ENCODE measurements at regions of chr3 and their contacts with region 1.

Region 1: DNA sequence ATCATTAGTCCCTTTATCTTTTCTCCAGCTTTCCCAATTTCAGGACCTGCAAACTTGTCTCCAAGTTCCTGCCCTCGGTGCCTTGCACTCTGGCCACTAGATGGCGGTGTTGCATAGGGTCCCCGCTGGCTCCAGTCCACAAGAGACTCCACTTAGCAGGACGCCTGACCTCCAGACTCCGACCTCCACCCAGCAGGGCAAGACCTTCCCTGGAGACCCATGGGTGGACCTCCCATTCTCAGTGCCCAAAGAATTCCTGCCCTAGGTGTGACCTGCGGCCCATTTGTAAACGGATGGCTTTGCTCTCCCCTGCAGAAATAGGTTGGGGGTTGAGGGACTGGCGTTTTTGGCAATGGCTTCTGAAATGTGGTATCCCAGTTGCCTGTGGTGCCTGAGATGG is 82.6 kb downstream of the LSM3 start:
- DNase-seq: peak; percentile 80
- ATAC-seq: peak; percentile 53
- H3K4me3 ChIP-seq: no peak overlapping the region
- H3K4me3 Mint-ChIP-seq: no peak overlapping the region
- H3K27ac ChIP-seq: no peak overlapping the region
- H3K27ac Mint-ChIP-seq: no peak overlapping the region
- H3K4me1 ChIP-seq: no peaks in the 10 kb centered on the region
- H3K4me1 Mint-ChIP-seq: no peaks in the 10 kb centered on the region
- H3K27me3 ChIP-seq: peaks cover 0 to 7% (median under 1%) of the 10 kb centered on the region in 4 experiments
- H3K27me3 Mint-ChIP-seq: peaks cover 32% of the 10 kb centered on the region
- CTCF ChIP-seq: peak; percentile 99

Region 2: DNA sequence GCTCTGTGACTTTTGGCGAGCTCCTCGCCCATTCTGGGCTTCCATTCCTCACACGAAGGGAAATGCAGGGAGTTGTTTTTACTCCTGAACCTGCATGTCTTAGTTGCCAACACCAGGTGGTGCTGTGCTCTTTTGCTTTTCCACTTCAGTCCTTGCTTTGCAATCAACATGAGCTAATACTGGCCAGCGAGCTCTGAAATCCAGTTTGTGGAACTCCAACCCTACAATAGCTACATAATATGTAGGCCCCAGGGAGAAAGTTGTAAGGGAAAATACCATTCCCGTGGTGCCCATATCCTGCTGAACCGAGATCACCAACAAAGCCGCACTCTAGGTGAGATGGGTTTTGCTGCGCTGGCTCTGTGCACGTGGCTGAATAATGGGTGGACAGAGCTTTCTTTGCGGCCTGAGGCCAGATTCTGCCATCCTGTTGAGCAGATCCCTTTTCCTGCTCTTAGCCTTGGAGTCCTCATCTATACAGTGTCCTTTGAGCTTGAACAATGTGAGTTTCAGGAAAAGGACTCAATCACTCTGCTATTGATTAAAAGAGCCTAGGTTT is 57.6 kb before region 1 on chr3:
- CTCF ChIA-PET with region 1: interaction called, 4 read pairs
- POLR2A ChIA-PET with region 1: no interaction called
- intact Hi-C with region 1: loop called (anchors 1 kb)
- DNase-seq: peak; percentile 61
- ATAC-seq: no peak
- H3K4me3 ChIP-seq: no peak overlapping the region
- H3K4me3 Mint-ChIP-seq: no peak overlapping the region
- H3K27ac ChIP-seq: no peak overlapping the region
- H3K27ac Mint-ChIP-seq: no peak overlapping the region
- H3K4me1 ChIP-seq: no peaks in the 10 kb centered on the region
- H3K4me1 Mint-ChIP-seq: peaks cover 2% of the 10 kb centered on the region
- H3K27me3 ChIP-seq: no peaks in the 10 kb centered on the region
- H3K27me3 Mint-ChIP-seq: no peaks in the 10 kb centered on the region
- CTCF ChIP-seq: peak; percentile 87

Region 3: DNA sequence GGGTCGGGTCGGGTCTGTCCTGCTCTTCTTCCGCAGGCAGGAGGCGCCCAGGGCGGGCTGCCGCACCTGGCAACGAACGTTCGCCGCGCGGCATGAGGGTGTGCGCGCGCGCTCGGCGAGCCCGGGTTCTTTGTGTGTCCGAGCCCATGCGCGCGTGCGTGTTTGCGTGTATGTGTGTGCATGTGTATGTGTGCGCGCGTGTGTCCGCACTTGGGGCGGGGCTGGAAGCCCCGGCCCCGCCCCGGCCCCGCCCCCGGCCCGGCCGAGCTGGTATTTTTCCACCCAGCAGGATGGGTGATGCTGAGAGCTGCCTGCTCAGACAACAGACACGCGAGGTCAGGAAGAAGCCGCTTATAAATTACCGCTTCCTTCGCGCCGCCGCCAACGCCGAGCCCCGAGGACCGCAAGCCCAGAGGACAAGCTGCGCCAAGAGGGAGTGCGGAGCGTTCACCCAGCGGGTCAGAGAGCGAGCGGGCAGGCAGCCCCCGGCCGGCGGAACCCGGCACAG is 141.1 kb after region 1 on chr3 and contains the start of gene SLC6A6:
- CTCF ChIA-PET with region 1: interaction called, 3 read pairs
- POLR2A ChIA-PET with region 1: no interaction called
- intact Hi-C with region 1: loop called (anchors 1 kb)
- DNase-seq: peak; percentile 97
- ATAC-seq: peak; percentile 80
- H3K4me3 ChIP-seq: peak within 1 kb of the TSS; percentile 53 to 87 (median 85)
- H3K4me3 Mint-ChIP-seq: peak within 1 kb of the TSS; percentile 99
- H3K27ac ChIP-seq: peak within 1 kb of the TSS; percentile 81 to 89
- H3K27ac Mint-ChIP-seq: peak within 1 kb of the TSS; percentile 98
- H3K4me1 ChIP-seq: peaks cover 39 to 55% of the 10 kb centered on the region in 2 donors
- H3K4me1 Mint-ChIP-seq: peaks cover 60% of the 10 kb centered on the region
- H3K27me3 ChIP-seq: no peaks in the 10 kb centered on the region
- H3K27me3 Mint-ChIP-seq: no peaks in the 10 kb centered on the region
- CTCF ChIP-seq: peak; percentile 67
- total RNA-seq, gene SLC6A6: 48.7 and 50.1 TPM in 2 replicates

Region 4: DNA sequence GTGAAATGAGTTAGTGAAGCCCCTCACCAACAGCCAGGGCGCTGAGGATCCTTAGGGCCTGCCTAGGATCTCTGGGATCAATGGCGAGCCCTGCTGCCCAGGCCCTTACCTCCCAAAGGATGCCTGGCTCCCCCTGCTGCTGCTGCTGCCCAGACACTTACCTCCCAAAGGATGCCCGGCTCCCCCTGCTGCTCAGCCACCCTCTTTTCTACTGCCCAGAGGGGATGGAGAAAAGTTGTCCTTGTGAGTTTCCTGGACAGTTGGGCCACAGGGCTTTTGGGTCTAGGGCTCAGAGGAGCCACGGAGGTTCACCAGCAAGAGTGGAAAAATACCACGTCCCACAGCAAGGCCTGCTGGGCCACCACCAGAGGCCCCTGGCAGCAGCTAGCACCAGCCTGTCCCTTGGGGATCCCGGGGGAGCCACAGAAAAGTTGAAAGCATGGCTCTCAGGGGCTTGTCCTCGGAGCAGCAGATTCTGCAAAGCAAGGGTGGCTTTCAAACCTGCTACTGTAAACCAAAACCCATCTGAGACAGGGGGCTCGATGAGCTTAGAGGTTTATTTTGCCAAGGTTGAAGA is 200.6 kb after region 1 on chr3:
- CTCF ChIA-PET with region 1: interaction called, 124 read pairs
- POLR2A ChIA-PET with region 1: no interaction called
- intact Hi-C with region 1: loop called (anchors 1 kb)
- DNase-seq: peak; percentile 62
- ATAC-seq: peak; percentile 71
- H3K4me3 ChIP-seq: no peak overlapping the region
- H3K4me3 Mint-ChIP-seq: no peak overlapping the region
- H3K27ac ChIP-seq: no peak overlapping the region
- H3K27ac Mint-ChIP-seq: no peak overlapping the region
- H3K4me1 ChIP-seq: no peaks in the 10 kb centered on the region
- H3K4me1 Mint-ChIP-seq: no peaks in the 10 kb centered on the region
- H3K27me3 ChIP-seq: no peaks in the 10 kb centered on the region
- H3K27me3 Mint-ChIP-seq: no peaks in the 10 kb centered on the region
- CTCF ChIP-seq: peak; percentile 49

Measured in B cell (primary cell).